ENCODE measurements at regions of chr12 and their contacts with region 1.

Region 1: GRCh38 chr12:115916910-115917668 is 360.4 kb downstream of the MED13L start:
- DNase-seq: peak in 1 of 2 donors; percentile 69
- H3K4me3 ChIP-seq: peak overlapping the region in 1 of 2 donors; percentile 15
- H3K27ac ChIP-seq: no peak overlapping the region
- H3K4me1 ChIP-seq: peaks cover 0 to 5% of the 10 kb centered on the region in 2 donors
- H3K27me3 ChIP-seq: peaks cover 4% of the 10 kb centered on the region
- CTCF ChIP-seq: peak; percentile 92 to 97 (median 94)

Region 2: DNA sequence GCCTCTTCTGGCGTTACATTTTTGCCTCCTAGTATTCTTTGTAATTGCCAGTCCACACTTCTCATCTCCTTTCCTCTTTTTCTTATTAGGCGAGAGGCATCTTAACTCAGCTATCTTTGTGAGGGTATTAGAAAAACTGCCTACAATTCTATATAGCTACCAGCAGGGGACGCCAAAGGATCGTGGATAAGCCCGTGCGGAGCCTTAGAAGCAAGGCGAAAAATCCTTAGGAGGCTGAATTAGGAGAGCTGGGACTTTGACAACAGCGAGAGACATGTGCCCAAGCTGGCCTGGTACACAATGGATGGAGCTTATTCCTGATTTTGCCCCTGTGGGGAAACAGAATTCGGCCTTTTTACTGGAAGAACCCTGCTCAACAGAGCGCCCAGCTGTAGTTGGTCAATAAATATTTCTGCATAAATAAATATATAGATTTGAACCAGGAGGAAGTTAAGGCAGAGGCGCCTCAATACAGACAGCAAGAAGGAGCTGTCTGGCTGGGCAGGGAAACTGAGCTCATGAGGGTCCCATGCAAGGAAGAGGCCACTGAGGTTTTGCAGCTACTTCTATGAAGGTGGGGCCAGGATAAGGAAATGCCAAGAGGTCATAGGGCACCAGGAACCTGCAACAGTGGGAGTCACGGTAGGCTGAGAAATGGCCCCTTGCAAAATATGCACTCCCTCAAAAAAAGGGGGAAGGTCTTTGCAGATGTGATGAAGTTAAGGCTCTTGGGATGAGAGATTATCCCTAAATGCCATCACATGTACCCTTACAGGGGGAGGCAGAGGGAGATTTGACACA is 1936.4 kb before region 1 on chr12:
- intact Hi-C with region 1: loop called (anchors 5 kb)
- DNase-seq: no peak
- H3K4me3 ChIP-seq: no peak overlapping the region
- H3K27ac ChIP-seq: no peak overlapping the region
- H3K4me1 ChIP-seq: no peaks in the 10 kb centered on the region
- H3K27me3 ChIP-seq: no peaks in the 10 kb centered on the region
- CTCF ChIP-seq: peak; percentile 79 to 88 (median 85)

Region 3: GRCh38 chr12:114662512-114663177 is 1254.4 kb before region 1 on chr12:
- intact Hi-C with region 1: loop called (anchors 1 kb)
- DNase-seq: peak in 1 of 2 donors; percentile 86
- H3K4me3 ChIP-seq: no peak overlapping the region
- H3K27ac ChIP-seq: no peak overlapping the region
- H3K4me1 ChIP-seq: peaks cover 0 to under 1% of the 10 kb centered on the region in 2 donors
- H3K27me3 ChIP-seq: peaks cover 10% of the 10 kb centered on the region
- CTCF ChIP-seq: peak; percentile 73 to 91 (median 90)

Region 4: GRCh38 chr12:115962216-115962615 is 45.1 kb after region 1 on chr12:
- intact Hi-C with region 1: no loop called
- DNase-seq: no peak
- H3K4me3 ChIP-seq: no peak overlapping the region
- H3K27ac ChIP-seq: peak overlapping the region; percentile 22 to 46
- H3K4me1 ChIP-seq: peaks cover 0 to 8% of the 10 kb centered on the region in 2 donors
- H3K27me3 ChIP-seq: no peaks in the 10 kb centered on the region
- CTCF ChIP-seq: no peak

Region 5: DNA sequence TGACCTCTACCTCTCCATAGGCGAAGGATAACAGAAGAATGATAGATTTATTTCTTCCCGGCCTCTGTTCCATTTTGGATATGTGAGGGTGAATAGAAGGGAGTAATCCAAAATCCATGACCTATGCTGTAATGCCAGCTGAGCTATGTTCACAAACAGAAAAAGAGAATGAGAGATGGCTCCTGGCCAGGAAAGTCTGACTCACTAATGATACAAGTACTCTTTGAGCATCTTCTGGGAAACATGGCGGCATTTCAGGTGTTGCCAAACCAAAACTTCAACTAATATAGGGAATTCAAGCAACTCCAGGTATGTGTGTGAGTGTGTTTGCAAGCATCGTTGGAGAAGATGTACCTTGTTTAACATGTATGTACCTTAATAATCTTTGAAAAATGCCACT is 305.3 kb after region 1 on chr12:
- intact Hi-C with region 1: no loop called
- DNase-seq: peak in 1 of 2 donors; percentile 88
- H3K4me3 ChIP-seq: no peak overlapping the region
- H3K27ac ChIP-seq: peak overlapping the region in 1 of 2 donors; percentile 5
- H3K4me1 ChIP-seq: peaks cover 5 to 42% of the 10 kb centered on the region in 2 donors
- H3K27me3 ChIP-seq: no peaks in the 10 kb centered on the region
- CTCF ChIP-seq: no peak